Calu3 (cell line): ENCODE measurements at regions of chr15 and their contacts with region 1.

Region 1: DNA sequence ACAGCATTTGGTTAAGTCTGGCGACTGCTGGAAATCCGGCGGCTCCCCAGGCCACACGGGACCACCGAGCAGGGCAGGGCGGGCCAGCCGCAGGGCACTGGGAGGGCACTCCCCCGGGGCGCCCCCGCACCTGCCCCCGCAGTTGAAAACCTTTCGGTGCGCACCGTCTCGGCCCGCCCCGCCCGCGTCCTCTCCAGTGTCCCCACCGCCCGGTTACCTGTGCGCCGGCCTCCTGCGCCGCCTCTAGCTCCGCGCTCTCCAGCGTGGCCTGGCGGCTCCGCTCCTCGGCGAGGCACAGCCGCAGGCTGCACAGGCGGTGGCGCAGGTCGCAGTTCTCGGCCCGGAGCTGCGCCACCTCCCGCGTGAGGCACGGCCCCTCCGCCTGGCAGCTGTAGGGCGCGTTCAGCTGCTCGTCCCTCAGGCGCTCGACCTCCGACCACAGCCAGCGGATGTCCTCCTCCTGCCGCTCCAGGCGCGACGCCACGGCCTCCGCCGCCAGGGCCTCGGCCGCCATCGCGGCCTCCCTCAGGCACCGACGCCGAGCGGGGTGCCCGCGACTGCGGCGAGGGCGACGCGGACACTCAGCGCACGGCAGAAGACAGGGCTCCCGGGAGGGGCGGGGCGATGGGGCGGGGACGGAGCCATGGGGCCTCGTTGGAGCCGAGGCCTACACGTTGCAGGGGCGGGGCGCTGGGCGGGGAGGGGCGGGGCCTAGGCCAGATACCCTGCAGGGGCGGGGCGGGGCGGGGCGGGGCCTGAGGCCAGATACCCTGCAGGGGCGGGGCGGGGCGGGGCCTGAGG is at the start of gene TARS3:
- DNase-seq: peak; percentile 91
- H3K4me3 Mint-ChIP-seq: peak within 1 kb of the TSS; percentile 73
- H3K27ac Mint-ChIP-seq: no peak within 1 kb of the TSS
- H3K4me1 Mint-ChIP-seq: no peaks in the 10 kb centered on the region
- H3K27me3 Mint-ChIP-seq: peaks cover 15% of the 10 kb centered on the region
- CTCF ChIP-seq: no peak
- total RNA-seq, gene TARS3: 3.8 and 4.1 TPM in 2 replicates

Region 2: GRCh38 chr15:101652098-101652782 is 71.8 kb before region 1 on chr15 and contains the start of gene TM2D3:
- CTCF ChIA-PET with region 1: no interaction called
- intact Hi-C with region 1: loop called (anchors 5 kb)
- DNase-seq: peak; percentile 98
- H3K4me3 Mint-ChIP-seq: peak within 1 kb of the TSS; percentile 81
- H3K27ac Mint-ChIP-seq: peak within 1 kb of the TSS; percentile 81
- H3K4me1 Mint-ChIP-seq: peaks cover 7% of the 10 kb centered on the region
- H3K27me3 Mint-ChIP-seq: no peaks in the 10 kb centered on the region
- CTCF ChIP-seq: peak; percentile 79
- total RNA-seq, gene TM2D3: 44.1 and 48.8 TPM in 2 replicates

Region 3: GRCh38 chr15:101710806-101711205 is 13.3 kb before region 1 on chr15:
- CTCF ChIA-PET with region 1: no interaction called
- intact Hi-C with region 1: no loop called
- DNase-seq: no peak
- H3K4me3 Mint-ChIP-seq: no peak overlapping the region
- H3K27ac Mint-ChIP-seq: no peak overlapping the region
- H3K4me1 Mint-ChIP-seq: peaks cover 9% of the 10 kb centered on the region
- H3K27me3 Mint-ChIP-seq: no peaks in the 10 kb centered on the region
- CTCF ChIP-seq: no peak